ENCODE measurements at regions of chr15 and their contacts with region 1.

Region 1: DNA sequence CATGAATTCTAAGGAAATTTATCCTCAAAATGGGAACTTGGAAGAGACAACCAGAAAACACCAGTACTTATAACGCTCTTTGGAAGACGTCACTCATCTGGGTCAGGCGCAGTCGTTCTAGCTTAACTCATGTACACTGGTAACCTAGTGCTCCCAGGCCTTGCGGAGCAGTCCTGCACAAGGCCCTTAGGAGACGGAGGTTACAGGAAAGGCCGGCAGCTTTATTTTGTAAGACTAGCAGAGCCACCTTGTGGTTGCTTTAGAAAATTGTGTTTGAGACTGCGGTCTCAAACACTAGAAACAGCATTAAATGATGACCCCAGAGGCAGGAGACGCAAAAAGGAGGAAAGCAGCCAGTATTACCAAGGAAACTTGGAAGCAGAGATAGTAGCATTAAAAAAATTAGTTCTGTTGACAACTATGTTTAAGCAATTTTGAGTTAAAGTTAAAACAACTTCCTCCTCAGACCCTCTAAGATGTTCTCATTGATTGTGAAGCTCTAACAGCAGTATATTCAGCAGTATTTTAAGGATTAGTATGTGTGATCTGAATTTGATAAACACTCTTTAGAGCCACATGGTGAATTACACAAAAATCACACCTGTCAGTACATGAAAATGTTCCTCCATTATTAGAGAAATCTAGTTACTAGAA is 141.9 kb upstream of the C2CD4B start:
- DNase-seq: peak; percentile 71 to 75
- H3K4me3 ChIP-seq: no peak overlapping the region
- H3K4me3 Mint-ChIP-seq: no peak overlapping the region
- H3K27ac Mint-ChIP-seq: no peak overlapping the region
- H3K4me1 ChIP-seq: no peaks in the 10 kb centered on the region
- H3K4me1 Mint-ChIP-seq: peaks cover 9% of the 10 kb centered on the region
- H3K27me3 ChIP-seq: no peaks in the 10 kb centered on the region
- H3K27me3 Mint-ChIP-seq: peaks cover 2% of the 10 kb centered on the region
- CTCF ChIP-seq: peak; percentile 70 to 71

Region 2: GRCh38 chr15:61871926-61872522 is 435.0 kb before region 1 on chr15:
- CTCF ChIA-PET with region 1: no interaction called
- POLR2A ChIA-PET with region 1: no interaction called
- intact Hi-C with region 1: loop called (anchors 5 kb)
- DNase-seq: no peak
- H3K4me3 ChIP-seq: no peak overlapping the region
- H3K4me3 Mint-ChIP-seq: no peak overlapping the region
- H3K27ac Mint-ChIP-seq: no peak overlapping the region
- H3K4me1 ChIP-seq: no peaks in the 10 kb centered on the region
- H3K4me1 Mint-ChIP-seq: no peaks in the 10 kb centered on the region
- H3K27me3 ChIP-seq: no peaks in the 10 kb centered on the region
- H3K27me3 Mint-ChIP-seq: no peaks in the 10 kb centered on the region
- CTCF ChIP-seq: peak; percentile 30 to 43

Region 3: GRCh38 chr15:62060113-62060895 is 246.7 kb before region 1 on chr15 and contains the start of gene VPS13C:
- CTCF ChIA-PET with region 1: interaction called, 11 read pairs
- POLR2A ChIA-PET with region 1: no interaction called
- intact Hi-C with region 1: no loop called
- DNase-seq: peak; percentile 94 to 95
- H3K4me3 ChIP-seq: peak within 1 kb of the TSS; percentile 85
- H3K4me3 Mint-ChIP-seq: peak within 1 kb of the TSS; percentile 87
- H3K27ac Mint-ChIP-seq: peak within 1 kb of the TSS; percentile 92
- H3K4me1 ChIP-seq: peaks cover 5% of the 10 kb centered on the region; the same call in 1 of the 2 replicates
- H3K4me1 Mint-ChIP-seq: peaks cover 8% of the 10 kb centered on the region
- H3K27me3 ChIP-seq: no peaks in the 10 kb centered on the region
- H3K27me3 Mint-ChIP-seq: peaks cover 3% of the 10 kb centered on the region
- CTCF ChIP-seq: peak; percentile 74 to 75
- total RNA-seq, gene VPS13C: 42.4 and 44.0 TPM in 2 replicates

Region 4: DNA sequence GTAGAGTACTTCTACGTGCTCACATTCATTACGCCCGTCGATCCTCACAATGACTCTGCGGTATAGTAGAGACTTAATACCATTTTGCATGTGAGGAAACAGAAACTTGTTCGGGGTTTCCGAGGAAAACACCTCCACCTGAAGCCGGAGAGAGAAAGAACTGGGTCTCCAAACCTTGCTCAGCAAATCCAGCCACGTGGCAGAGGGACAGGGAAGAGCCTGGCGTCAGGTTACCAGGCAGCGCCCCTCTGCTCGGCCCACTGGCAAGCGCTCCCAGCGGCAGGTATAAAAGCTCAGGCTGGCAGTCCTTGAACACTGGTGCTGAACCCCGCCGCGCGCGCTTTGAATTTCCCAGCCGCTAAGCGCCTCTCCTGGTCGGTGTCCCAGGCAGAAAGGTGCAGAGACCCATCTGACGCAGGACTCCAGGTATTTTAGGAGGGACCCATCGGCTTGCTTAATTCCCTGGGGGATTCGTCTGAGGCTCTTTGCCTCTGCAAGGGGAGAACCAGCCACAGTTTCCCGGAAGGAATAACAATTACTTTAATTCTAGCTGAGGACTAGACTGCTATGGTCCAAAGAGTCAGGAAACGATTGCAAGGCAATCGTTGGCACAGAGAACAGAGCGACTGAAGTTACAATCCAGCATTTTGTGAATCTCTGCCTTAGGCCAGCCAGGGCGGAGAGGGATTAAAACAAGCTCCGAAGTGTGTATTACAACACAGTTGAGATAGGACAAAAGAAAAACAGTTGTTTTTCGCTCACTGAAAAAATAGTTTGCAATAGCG is 240.1 kb before region 1 on chr15 and contains the start of gene C2CD4A:
- CTCF ChIA-PET with region 1: interaction called, 4 read pairs
- POLR2A ChIA-PET with region 1: no interaction called
- intact Hi-C with region 1: loop called (anchors 2 kb)
- DNase-seq: peak; percentile 87 to 90
- H3K4me3 ChIP-seq: peak within 1 kb of the TSS; percentile 38
- H3K4me3 Mint-ChIP-seq: peak within 1 kb of the TSS; percentile 73
- H3K27ac Mint-ChIP-seq: no peak within 1 kb of the TSS
- H3K4me1 ChIP-seq: peaks cover 10% of the 10 kb centered on the region
- H3K4me1 Mint-ChIP-seq: peaks cover 3% of the 10 kb centered on the region
- H3K27me3 ChIP-seq: no peaks in the 10 kb centered on the region
- H3K27me3 Mint-ChIP-seq: peaks cover 3% of the 10 kb centered on the region
- CTCF ChIP-seq: peak in 1 of 2 experiments; percentile 37
- total RNA-seq, gene C2CD4A: 0.11 and 0.19 TPM in 2 replicates

Region 5: GRCh38 chr15:62125773-62126172 is 181.2 kb before region 1 on chr15:
- CTCF ChIA-PET with region 1: interaction called, 8 read pairs
- POLR2A ChIA-PET with region 1: no interaction called
- intact Hi-C with region 1: loop called (anchors 2 kb)
- DNase-seq: peak; percentile 38 to 41
- H3K4me3 ChIP-seq: no peak overlapping the region
- H3K4me3 Mint-ChIP-seq: no peak overlapping the region
- H3K27ac Mint-ChIP-seq: no peak overlapping the region
- H3K4me1 ChIP-seq: peaks cover 6% of the 10 kb centered on the region; the same call in 1 of the 2 replicates
- H3K4me1 Mint-ChIP-seq: peaks cover 12% of the 10 kb centered on the region
- H3K27me3 ChIP-seq: no peaks in the 10 kb centered on the region
- H3K27me3 Mint-ChIP-seq: peaks cover 5% of the 10 kb centered on the region
- CTCF ChIP-seq: peak; percentile 31 to 34

Region 6: DNA sequence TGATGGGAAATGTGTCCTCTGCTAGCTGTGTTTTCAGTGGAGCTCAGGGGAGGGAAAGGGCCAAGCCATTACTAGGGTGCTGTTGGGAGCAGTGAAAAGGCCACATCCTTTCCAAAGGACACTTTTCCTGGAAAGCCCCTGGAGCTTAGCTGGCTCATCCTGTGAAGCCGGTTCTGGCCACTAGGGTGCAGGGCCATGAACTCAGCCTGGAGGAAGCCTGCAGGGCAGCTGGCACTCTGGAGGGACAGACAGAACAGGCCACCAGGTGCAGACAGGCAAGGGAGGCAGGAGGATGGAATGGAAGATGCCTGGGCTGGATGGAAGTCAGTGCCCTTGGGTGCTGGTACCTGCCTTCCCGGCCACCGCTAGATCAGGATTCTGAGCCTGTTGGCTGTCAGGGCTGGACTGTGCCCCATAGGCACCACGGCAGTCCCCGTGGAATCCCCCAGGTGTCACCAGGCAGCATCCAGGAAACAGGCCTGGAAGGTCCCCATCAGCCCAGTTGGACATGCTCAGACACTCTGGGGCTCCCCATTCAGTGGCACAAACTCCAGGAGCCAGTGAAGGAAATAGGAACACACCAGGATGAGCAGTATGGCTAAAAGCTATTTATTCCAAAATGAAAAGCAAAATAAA is 65.7 kb before region 1 on chr15:
- CTCF ChIA-PET with region 1: interaction called, 3 read pairs
- POLR2A ChIA-PET with region 1: no interaction called
- intact Hi-C with region 1: loop called (anchors 1 kb)
- DNase-seq: peak; percentile 52 to 53
- H3K4me3 ChIP-seq: no peak overlapping the region
- H3K4me3 Mint-ChIP-seq: no peak overlapping the region
- H3K27ac Mint-ChIP-seq: no peak overlapping the region
- H3K4me1 ChIP-seq: no peaks in the 10 kb centered on the region
- H3K4me1 Mint-ChIP-seq: no peaks in the 10 kb centered on the region
- H3K27me3 ChIP-seq: no peaks in the 10 kb centered on the region
- H3K27me3 Mint-ChIP-seq: peaks cover 8% of the 10 kb centered on the region
- CTCF ChIP-seq: peak; percentile 39 to 53

Region 7: DNA sequence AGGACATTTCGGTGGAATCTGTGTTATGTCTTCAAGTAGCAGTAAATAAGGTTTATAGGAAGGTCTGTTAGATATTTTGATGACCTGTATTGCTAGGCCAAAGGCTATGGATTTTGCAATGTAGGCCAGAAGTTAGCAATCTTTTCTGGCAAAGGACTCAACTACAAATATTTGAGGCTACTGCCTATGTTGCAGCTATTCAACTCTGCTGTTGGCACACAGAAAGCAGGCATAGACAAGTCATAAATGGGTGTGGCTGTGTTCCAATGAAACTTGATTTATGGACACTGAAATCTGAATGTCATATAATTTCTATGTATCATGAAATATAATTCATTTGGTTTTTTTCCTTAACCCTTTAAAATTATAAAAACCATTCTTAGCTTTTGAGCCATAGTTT is 296.8 kb after region 1 on chr15:
- CTCF ChIA-PET with region 1: no interaction called
- POLR2A ChIA-PET with region 1: no interaction called
- intact Hi-C with region 1: no loop called
- DNase-seq: no peak
- H3K4me3 ChIP-seq: no peak overlapping the region
- H3K4me3 Mint-ChIP-seq: no peak overlapping the region
- H3K27ac Mint-ChIP-seq: no peak overlapping the region
- H3K4me1 ChIP-seq: 0 out of 2 replicates have a peak, but pooled peaks cover 9% of the 10 kb centered on the region
- H3K4me1 Mint-ChIP-seq: peaks cover 15% of the 10 kb centered on the region
- H3K27me3 ChIP-seq: no peaks in the 10 kb centered on the region
- H3K27me3 Mint-ChIP-seq: no peaks in the 10 kb centered on the region
- CTCF ChIP-seq: no peak

Measured in Caco-2 (cell line).